IMR-90 (cell line): ENCODE measurements at regions of chr6 and their contacts with region 1.

Region 1: DNA sequence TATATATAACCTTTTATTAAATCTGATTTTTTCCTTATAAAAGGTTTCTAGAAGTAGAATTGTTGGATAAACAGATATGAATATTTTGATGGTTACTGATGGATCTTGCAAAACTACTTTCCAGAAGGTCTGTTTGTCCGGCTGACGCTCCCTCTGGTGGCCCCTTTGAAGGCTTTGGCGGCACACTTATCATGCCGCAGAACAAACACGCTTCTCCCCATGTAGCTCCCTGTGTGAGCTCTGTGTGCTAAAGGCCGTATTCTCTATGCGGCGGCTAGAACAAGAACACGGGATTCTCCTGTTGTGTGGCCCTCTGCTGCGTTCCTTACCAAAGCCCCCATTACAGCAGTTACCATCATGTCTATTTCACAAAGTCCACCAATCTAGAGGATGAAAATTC is 30.0 kb downstream of the PPP1R3G start:
- DNase-seq: peak; percentile 31
- ATAC-seq: peak; percentile 52; the same call in 1 of the 2 replicates
- H3K4me3 ChIP-seq: no peak overlapping the region
- H3K27ac ChIP-seq: no peak overlapping the region
- H3K4me1 ChIP-seq: peaks cover 2% of the 10 kb centered on the region; the same call in 1 of the 2 replicates
- H3K27me3 ChIP-seq: no peaks in the 10 kb centered on the region; the same call in none of the 2 replicates
- CTCF ChIP-seq: peak; percentile 21; the same call in 1 of the 2 replicates
- POLR2A ChIP-seq: no peak
- RAD21 ChIP-seq: 0 out of 2 replicates have a peak, but pooled peaks have one; percentile 15

Region 2: DNA sequence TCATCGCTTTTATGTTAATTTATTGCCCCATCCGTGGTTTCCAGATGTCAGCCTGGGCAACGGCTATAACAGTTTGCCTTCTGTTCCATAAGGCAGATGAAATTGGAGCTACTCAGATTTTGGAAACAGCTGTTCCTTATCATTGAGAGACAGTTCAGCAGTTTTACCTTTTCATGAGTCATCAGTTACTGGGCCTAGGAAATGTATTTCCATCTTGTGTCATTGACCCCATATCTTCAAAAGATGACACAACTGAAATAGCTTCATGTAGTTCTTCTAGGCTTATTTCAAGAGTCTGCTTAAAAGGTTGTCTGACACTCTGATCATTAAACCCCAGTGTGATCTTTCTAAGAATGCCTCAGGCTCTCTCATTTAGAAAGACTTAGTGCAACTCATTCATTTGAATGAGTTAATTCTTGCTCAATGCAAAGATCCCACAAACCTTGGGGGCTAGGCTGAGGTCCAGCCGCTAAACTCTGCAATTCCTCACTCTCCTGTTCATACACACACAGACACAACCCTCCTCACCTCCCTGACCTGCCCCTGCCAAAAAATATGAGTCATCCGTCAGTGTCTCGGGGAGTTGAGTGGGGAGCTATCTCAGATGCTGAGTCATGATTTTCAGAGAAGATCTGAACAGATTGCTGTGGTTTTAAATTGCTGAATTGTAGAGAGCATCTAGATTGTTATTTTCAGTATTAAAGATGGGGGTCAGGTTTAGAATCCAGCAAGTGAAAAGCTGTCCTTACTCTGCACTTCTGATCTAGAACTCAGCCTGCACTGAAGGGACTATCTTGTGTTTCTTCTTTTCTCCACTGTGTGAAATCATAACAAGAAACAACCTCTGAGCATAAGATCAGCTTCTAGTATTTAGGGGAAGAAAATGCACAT is 173.1 kb before region 1 on chr6:
- CTCF ChIA-PET with region 1: no interaction called
- POLR2A ChIA-PET with region 1: no interaction called
- dilution Hi-C with region 1: no loop called
- in situ Hi-C with region 1: no loop called
- intact Hi-C with region 1: loop called (anchors 10 kb)
- DNase-seq: peak; percentile 96
- ATAC-seq: peak; percentile 93
- H3K4me3 ChIP-seq: no peak overlapping the region
- H3K27ac ChIP-seq: peak overlapping the region; percentile 87; the same call in 1 of the 2 replicates
- H3K4me1 ChIP-seq: peaks cover 18% of the 10 kb centered on the region
- H3K27me3 ChIP-seq: no peaks in the 10 kb centered on the region
- CTCF ChIP-seq: no peak
- POLR2A ChIP-seq: no peak
- RAD21 ChIP-seq: no peak; the same call in 1 of the 2 replicates

Region 3: DNA sequence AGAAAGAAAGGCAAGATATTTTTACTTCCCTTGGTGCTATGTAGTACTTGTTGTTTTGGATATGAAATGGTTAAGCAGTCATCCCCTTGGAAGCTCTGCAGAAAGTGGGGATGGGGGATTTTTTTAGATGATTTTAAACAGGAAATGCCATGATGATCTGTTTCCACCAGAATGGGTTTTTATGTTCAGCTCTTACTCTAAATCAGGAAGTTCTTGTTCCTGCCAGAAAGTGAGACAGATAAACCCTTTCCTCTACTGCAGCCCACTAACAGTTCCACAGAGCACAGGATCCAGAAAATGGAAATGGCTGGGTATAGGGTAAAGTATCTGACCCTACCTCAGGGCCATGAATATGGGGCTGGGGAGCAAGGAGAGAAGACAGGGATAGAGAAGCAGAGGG is 62.1 kb before region 1 on chr6:
- CTCF ChIA-PET with region 1: no interaction called
- POLR2A ChIA-PET with region 1: no interaction called
- dilution Hi-C with region 1: no loop called
- in situ Hi-C with region 1: no loop called
- intact Hi-C with region 1: loop called (anchors 1 kb)
- DNase-seq: peak; percentile 71
- ATAC-seq: no peak; the same call in 1 of the 2 replicates
- H3K4me3 ChIP-seq: no peak overlapping the region
- H3K27ac ChIP-seq: peak overlapping the region; percentile 82; the same call in 1 of the 2 replicates
- H3K4me1 ChIP-seq: peaks cover 7% of the 10 kb centered on the region
- H3K27me3 ChIP-seq: no peaks in the 10 kb centered on the region
- CTCF ChIP-seq: no peak
- POLR2A ChIP-seq: no peak
- RAD21 ChIP-seq: no peak